MCF 10A (cell line): ENCODE measurements at regions of chr17 and their contacts with region 1.

Region 1: DNA sequence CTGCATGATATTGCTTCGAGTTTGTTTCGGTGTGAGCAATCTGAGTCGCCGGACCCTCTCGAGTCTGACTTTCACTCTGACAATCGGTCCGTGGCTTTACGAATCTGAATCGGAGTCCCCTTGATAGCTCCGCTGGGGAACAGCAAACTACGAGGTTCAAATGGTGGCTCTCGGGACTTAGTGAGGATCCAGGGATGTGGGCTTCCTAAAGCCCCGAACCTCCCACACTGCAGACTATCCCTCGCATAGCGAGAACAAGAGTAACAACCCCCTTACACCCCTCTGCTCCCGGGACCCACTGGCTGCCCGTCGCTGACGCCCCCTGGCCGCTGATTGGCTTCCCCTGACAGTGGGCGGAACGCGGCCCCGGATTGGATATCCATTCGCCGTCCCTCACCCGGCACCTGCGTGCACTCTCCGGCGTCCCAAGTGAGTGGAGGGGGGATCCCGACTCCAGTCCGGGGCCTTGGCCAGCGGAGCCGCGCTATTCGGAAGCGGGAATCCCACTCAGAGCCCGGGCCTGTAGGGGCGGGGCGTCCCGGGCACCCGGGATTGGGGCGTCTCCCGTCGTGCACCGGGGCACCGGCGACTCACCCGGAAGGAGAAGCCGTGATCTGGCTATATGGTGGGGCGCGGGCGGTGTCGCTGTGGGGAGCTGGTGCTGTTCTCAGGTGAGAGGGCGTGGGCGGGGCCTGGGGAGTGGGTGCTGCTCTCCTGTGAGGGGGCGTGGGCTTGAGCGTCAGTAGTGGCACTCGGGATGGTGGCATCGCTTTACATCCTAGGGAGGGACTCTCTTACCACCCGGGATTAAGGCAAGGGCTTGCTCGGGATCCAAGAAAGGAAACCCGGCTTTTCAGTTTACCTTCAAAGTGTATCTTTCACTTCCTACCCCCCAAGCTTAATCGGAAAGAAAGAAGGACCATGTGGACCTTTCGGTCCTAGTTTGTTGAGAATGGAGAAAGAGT is at the start of gene SNX11:
- DNase-seq: peak; percentile 85
- H3K4me3 Mint-ChIP-seq: peak within 1 kb of the TSS; percentile 98
- H3K27ac Mint-ChIP-seq: peak within 1 kb of the TSS; percentile 87
- H3K4me1 Mint-ChIP-seq: peaks cover 21% of the 10 kb centered on the region
- H3K27me3 Mint-ChIP-seq: no peaks in the 10 kb centered on the region
- CTCF ChIP-seq: no peak
- total RNA-seq, gene SNX11: 21.7 and 24.2 TPM in 2 replicates

Region 2: DNA sequence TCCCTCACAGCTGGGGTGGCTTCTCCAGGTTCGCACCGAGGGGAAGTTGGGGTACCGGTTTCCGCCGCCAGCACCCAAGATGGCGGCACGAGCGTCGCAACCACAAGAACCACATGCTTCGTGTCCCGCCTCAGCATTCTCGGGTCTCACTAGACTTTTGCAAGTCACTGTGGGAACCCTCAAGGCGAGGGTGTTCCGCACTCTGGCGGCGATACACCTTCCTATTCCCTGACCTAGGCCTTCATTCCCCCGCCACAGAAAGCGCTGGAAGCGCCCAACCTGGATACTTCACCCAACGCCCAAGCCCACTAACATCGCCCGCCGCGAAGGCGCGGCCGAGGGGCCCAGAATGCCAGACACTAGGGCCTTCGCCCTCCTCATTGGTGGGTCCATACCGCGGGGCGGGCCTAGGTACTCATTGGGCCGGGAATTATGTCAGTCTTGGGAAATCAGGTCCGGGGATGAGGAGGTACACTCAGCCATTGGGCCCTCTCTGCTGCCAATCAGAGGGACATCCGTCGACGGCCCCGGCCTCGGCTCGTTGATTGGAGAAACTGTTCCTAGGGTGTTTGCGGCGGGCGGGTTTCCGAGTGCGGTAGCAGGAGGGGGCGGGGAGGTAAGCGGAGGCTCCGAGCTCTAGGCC is 59.6 kb before region 1 on chr17 and contains the start of gene NFE2L1:
- CTCF ChIA-PET with region 1: interaction called, 3 read pairs
- POLR2A ChIA-PET with region 1: interaction called, 73 read pairs
- intact Hi-C with region 1: no loop called
- DNase-seq: peak; percentile 100
- H3K4me3 Mint-ChIP-seq: peak within 1 kb of the TSS; percentile 91
- H3K27ac Mint-ChIP-seq: peak within 1 kb of the TSS; percentile 100
- H3K4me1 Mint-ChIP-seq: peaks cover 47% of the 10 kb centered on the region
- H3K27me3 Mint-ChIP-seq: no peaks in the 10 kb centered on the region
- CTCF ChIP-seq: no peak
- total RNA-seq, gene NFE2L1: 235 and 315 TPM in 2 replicates

Region 3: DNA sequence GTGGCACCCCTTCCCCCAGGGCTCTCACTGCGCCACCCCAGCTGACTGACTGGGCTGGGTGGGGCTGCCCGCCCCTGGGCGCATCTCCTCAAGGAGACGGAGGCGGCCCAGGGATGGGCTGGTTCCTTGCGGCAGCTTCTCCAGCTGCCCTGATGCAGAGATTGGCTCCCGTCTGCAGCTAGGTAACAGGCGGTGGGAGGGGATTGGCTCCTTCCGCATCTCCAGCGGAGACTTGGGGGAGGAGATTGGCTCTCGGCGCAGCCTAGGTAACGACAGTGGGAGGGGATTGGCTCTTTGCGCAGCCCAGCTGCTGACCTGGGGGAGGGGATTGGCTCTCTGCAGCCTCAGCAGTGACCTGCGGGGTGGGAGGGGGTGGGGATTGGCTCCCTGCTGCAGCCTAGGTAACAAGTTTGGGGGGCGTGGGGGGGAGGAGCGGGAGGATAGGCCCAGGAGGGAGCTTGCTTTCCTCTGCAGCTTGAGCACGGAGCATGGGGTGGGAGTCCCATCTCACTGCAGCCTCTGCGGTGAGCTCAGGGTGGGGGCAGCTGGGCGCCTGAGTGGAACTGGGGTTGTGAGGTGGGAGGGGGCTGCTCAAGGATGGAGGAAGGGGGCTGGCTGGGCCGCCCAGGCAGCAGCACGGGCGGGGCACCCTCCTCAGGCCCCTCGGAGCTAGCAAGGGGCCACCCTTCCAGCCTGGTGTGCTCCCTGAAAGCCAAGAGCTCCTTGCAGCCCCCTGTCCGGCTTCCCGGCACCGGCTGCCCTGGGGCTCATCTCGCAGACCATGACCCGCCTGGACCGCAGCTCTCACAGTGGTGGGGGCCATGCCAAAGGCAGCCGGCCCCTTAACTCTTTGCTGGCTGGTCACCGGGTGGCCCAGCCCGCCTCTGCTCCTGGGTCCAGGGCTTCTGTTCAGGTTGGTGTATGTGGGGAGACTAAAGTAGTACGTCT is 52.9 kb before region 1 on chr17:
- CTCF ChIA-PET with region 1: interaction called, 3 read pairs
- POLR2A ChIA-PET with region 1: interaction called, 73 read pairs
- intact Hi-C with region 1: no loop called
- DNase-seq: peak; percentile 76
- H3K4me3 Mint-ChIP-seq: peak overlapping the region; percentile 91
- H3K27ac Mint-ChIP-seq: peak overlapping the region; percentile 93
- H3K4me1 Mint-ChIP-seq: peaks cover 67% of the 10 kb centered on the region
- H3K27me3 Mint-ChIP-seq: no peaks in the 10 kb centered on the region
- CTCF ChIP-seq: no peak

Region 4: DNA sequence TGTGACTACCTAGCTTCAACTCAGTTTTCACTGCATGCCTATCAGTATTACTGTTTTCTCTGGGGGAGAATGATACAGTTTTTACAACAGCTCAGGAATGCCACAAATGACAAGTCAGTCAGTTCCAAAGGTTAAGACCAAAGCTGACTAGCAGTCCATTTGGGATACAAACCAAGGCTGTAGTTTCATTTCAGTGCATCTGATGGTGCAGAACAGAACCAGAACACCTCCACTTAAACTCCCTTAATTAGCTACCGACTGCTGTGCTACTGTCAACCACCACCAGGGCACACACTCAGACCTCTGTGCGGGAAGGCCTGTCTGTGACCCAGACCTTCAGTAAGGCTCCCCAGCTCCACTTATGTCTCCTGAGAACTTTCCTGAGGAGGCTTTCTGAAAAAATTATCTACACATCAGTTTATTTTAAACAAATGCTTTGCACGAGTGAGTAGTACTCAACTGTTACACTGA is 38.9 kb before region 1 on chr17:
- CTCF ChIA-PET with region 1: interaction called, 4 read pairs
- POLR2A ChIA-PET with region 1: interaction called, 15 read pairs
- intact Hi-C with region 1: no loop called
- DNase-seq: no peak
- H3K4me3 Mint-ChIP-seq: no peak overlapping the region
- H3K27ac Mint-ChIP-seq: no peak overlapping the region
- H3K4me1 Mint-ChIP-seq: peaks cover 21% of the 10 kb centered on the region
- H3K27me3 Mint-ChIP-seq: no peaks in the 10 kb centered on the region
- CTCF ChIP-seq: peak; percentile 19

Region 5: GRCh38 chr17:48084932-48085444 is 22.5 kb before region 1 on chr17:
- CTCF ChIA-PET with region 1: interaction called, 34 read pairs
- POLR2A ChIA-PET with region 1: interaction called, 15 read pairs
- intact Hi-C with region 1: no loop called
- DNase-seq: no peak
- H3K4me3 Mint-ChIP-seq: no peak overlapping the region
- H3K27ac Mint-ChIP-seq: no peak overlapping the region
- H3K4me1 Mint-ChIP-seq: no peaks in the 10 kb centered on the region
- H3K27me3 Mint-ChIP-seq: no peaks in the 10 kb centered on the region
- CTCF ChIP-seq: no peak

Region 6: DNA sequence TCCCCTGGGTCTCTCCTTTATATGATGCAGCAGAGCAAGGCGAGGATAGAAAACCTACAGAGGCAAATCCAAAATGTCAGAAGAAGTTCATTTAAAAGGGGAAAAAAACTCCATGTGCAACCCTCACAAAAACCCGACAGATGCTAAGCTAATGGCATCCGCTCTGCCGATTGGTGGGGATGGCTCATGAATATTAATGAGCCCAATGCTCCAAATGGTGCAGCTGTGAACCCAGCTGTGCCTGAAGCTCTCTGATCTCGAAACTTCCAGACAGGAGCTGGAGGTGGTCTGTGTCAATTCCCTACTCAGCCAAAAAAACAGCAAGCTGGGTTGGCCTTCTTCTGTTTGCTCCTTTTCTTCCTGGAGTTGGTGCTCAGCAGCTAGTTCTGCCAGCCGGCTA is 15.7 kb after region 1 on chr17:
- CTCF ChIA-PET with region 1: interaction called, 5 read pairs
- POLR2A ChIA-PET with region 1: interaction called, 25 read pairs
- intact Hi-C with region 1: no loop called
- DNase-seq: no peak
- H3K4me3 Mint-ChIP-seq: no peak overlapping the region
- H3K27ac Mint-ChIP-seq: no peak overlapping the region
- H3K4me1 Mint-ChIP-seq: peaks cover 13% of the 10 kb centered on the region
- H3K27me3 Mint-ChIP-seq: no peaks in the 10 kb centered on the region
- CTCF ChIP-seq: no peak

Region 7: GRCh38 chr17:48131216-48131824 is 23.9 kb after region 1 on chr17:
- CTCF ChIA-PET with region 1: interaction called, 5 read pairs
- POLR2A ChIA-PET with region 1: interaction called, 25 read pairs
- intact Hi-C with region 1: no loop called
- DNase-seq: peak; percentile 85
- H3K4me3 Mint-ChIP-seq: no peak overlapping the region
- H3K27ac Mint-ChIP-seq: no peak overlapping the region
- H3K4me1 Mint-ChIP-seq: peaks cover 13% of the 10 kb centered on the region
- H3K27me3 Mint-ChIP-seq: no peaks in the 10 kb centered on the region
- CTCF ChIP-seq: peak; percentile 76

Region 8: DNA sequence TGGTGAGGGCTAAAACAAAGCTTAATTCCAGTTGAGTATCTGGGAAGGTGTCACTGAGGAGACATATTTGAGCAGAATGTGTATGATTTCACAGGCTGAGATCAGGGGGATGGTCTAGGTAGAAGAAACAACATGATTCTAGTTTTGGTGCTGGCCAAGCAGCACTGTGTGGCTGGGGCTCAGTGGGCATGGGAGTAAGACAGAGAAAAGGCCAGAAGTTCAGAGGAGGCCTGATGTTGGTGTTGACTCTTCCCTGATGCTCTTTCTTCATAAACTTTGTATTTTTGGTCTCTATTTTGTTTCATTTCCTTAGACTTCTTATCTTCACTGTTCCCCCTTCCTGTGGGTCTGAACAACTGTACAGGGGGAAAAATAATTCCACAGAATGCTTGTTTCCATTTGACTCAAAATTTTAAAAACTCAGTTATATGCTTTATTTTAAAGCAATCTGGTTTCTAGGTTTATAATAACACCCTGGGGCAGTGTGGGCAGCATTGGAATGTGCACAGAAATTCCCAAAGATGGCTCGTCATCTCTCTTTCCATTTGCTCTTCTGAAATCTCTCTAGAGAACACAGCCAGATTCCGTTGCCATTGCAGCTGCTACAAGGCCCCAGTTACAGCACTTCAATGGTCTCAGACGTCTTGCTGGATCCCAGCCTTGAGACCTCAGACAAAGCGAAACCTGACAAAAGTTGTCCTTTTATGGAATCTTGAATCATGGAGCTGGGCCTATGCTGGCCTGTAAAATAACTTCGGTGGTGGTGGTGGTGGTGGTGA is 68.4 kb after region 1 on chr17:
- CTCF ChIA-PET with region 1: no interaction called
- POLR2A ChIA-PET with region 1: no interaction called
- intact Hi-C with region 1: no loop called
- DNase-seq: no peak
- H3K4me3 Mint-ChIP-seq: no peak overlapping the region
- H3K27ac Mint-ChIP-seq: no peak overlapping the region
- H3K4me1 Mint-ChIP-seq: peaks cover 5% of the 10 kb centered on the region
- H3K27me3 Mint-ChIP-seq: peaks cover 70% of the 10 kb centered on the region
- CTCF ChIP-seq: no peak